Activated B cell treated with CpG ODN at 0.5 μM for 24 hours (primary cell): ENCODE measurements at regions of chr9 and their contacts with region 1.

Region 1: GRCh38 chr9:2014696-2015580 is at the start of gene SMARCA2:
- DNase-seq: peak; percentile 94
- ATAC-seq: peak; percentile 82
- H3K4me3 Mint-ChIP-seq: peak within 1 kb of the TSS; percentile 99
- H3K27ac Mint-ChIP-seq: peak within 1 kb of the TSS; percentile 98
- H3K4me1 Mint-ChIP-seq: peaks cover 28% of the 10 kb centered on the region
- H3K27me3 Mint-ChIP-seq: peaks cover 8% of the 10 kb centered on the region
- CTCF ChIP-seq: no peak
- total RNA-seq, gene SMARCA2: 235 and 238 TPM in 2 replicates

Region 2: DNA sequence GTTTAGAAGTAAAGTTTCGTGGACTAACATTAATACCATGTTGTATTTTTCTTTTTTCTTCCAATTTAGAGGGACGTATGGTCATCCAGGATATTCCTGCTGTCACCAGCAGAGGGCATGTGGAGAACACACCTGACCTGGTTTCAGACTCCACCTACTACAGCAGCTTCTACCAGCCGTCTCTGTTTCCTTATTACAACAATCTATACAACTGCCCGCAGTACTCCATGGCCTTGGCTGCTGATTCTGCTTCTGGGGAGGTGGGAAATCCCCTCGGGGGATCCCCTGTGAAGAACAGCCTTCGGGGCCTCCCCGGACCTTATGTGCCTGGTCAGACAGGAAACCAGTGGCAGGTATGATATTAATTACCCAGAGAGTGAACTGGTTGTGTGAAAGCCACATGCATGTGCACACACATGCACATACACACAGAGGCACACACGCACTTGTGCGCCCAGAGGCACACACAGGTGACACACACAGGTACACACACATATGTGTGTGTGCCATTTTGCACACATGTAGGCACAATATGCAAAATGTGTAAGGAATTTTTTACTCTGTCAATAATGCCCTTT is 1121.0 kb before region 1 on chr9:
- CTCF ChIA-PET with region 1: no interaction called
- POLR2A ChIA-PET with region 1: interaction called, 3 read pairs
- intact Hi-C with region 1: loop called (anchors 10 kb)
- DNase-seq: peak; percentile 38
- ATAC-seq: peak; percentile 98
- H3K4me3 Mint-ChIP-seq: no peak overlapping the region
- H3K27ac Mint-ChIP-seq: peak overlapping the region; percentile 47
- H3K4me1 Mint-ChIP-seq: peaks cover 13% of the 10 kb centered on the region
- H3K27me3 Mint-ChIP-seq: peaks cover 18% of the 10 kb centered on the region
- CTCF ChIP-seq: no peak

Region 3: GRCh38 chr9:1939926-1940368 is 75.0 kb before region 1 on chr9:
- CTCF ChIA-PET with region 1: interaction called, 8 read pairs
- POLR2A ChIA-PET with region 1: interaction called, 3 read pairs
- intact Hi-C with region 1: loop called (anchors 2 kb)
- DNase-seq: no peak
- ATAC-seq: peak; percentile 85
- H3K4me3 Mint-ChIP-seq: peak overlapping the region; percentile 15
- H3K27ac Mint-ChIP-seq: peak overlapping the region; percentile 32
- H3K4me1 Mint-ChIP-seq: peaks cover 25% of the 10 kb centered on the region
- H3K27me3 Mint-ChIP-seq: no peaks in the 10 kb centered on the region
- CTCF ChIP-seq: no peak

Region 4: DNA sequence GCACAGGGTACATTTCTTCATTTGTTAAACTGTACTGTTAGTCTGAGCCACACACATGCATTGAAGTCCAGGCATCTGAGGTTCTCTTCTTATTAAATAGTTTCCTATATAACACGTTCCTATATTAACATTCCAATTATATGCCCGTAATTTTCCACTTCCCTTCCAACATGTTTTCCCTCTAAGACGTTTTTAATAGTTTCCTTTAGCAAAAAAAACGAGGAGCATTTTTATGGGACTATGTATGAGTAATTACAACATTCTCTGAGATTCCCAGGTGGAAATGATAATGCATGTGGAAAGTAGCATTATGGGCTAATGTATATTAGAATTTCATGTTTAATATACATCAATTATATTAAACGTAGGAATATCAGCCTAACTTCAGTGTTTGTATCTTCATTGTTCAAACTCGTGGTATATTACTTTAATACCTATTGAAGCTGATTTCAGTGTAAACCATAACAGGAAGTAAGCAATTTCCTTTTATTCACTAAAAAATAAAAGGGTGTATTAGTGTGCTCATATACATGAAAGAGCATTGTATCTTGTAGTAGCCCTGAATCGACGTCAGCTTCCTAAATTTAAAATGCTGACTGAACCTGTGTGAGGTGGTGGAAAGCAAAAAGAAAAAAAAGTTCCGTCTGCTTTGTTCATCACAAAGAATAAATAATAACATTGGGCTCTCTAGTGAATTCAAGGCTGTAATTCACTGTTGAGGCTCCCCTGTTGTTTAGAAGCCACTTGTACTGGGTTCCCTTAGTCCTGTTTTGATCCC is 11.5 kb after region 1 on chr9:
- CTCF ChIA-PET with region 1: no interaction called
- POLR2A ChIA-PET with region 1: interaction called, 10 read pairs
- intact Hi-C with region 1: loop called (anchors 1 kb)
- DNase-seq: no peak
- ATAC-seq: no peak
- H3K4me3 Mint-ChIP-seq: no peak overlapping the region
- H3K27ac Mint-ChIP-seq: no peak overlapping the region
- H3K4me1 Mint-ChIP-seq: peaks cover 89% of the 10 kb centered on the region
- H3K27me3 Mint-ChIP-seq: no peaks in the 10 kb centered on the region
- CTCF ChIP-seq: no peak

Region 5: GRCh38 chr9:2053883-2054845 is 39.2 kb after region 1 on chr9:
- CTCF ChIA-PET with region 1: interaction called, 5 read pairs
- POLR2A ChIA-PET with region 1: interaction called, 70 read pairs
- intact Hi-C with region 1: loop called (anchors 1 kb)
- DNase-seq: peak; percentile 27
- ATAC-seq: peak; percentile 92
- H3K4me3 Mint-ChIP-seq: peak overlapping the region; percentile 55
- H3K27ac Mint-ChIP-seq: peak overlapping the region; percentile 85
- H3K4me1 Mint-ChIP-seq: peaks cover 29% of the 10 kb centered on the region
- H3K27me3 Mint-ChIP-seq: no peaks in the 10 kb centered on the region
- CTCF ChIP-seq: no peak

Region 6: DNA sequence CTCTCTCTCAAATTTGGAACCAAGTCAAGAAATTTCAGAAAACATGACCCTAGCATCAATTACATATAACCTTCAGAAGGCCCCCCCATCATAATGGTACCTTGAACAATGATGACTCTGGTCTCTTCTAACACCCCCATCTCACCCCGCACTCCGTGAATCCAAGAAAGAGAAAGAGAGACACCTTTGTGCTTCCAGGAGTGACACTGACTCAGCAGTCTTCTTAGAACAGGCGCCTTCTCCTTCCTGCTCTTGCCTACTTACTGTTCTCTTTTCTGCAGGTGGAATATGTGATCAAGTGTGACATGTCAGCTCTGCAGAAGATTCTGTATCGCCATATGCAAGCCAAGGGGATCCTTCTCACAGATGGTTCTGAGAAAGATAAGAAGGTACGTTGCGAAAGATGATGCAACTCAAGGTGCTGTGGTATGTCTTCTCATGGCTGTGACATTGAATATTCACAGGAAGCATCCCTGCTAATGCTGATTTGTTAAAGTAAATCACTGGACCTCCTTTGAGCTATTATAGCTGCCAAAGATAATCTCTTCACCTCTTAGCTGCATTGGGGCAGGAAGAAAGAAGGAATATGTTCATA is 81.5 kb after region 1 on chr9:
- CTCF ChIA-PET with region 1: no interaction called
- POLR2A ChIA-PET with region 1: no interaction called
- intact Hi-C with region 1: no loop called
- DNase-seq: no peak
- ATAC-seq: no peak
- H3K4me3 Mint-ChIP-seq: no peak overlapping the region
- H3K27ac Mint-ChIP-seq: peak overlapping the region; percentile 3
- H3K4me1 Mint-ChIP-seq: no peaks in the 10 kb centered on the region
- H3K27me3 Mint-ChIP-seq: no peaks in the 10 kb centered on the region
- CTCF ChIP-seq: no peak

Region 7: DNA sequence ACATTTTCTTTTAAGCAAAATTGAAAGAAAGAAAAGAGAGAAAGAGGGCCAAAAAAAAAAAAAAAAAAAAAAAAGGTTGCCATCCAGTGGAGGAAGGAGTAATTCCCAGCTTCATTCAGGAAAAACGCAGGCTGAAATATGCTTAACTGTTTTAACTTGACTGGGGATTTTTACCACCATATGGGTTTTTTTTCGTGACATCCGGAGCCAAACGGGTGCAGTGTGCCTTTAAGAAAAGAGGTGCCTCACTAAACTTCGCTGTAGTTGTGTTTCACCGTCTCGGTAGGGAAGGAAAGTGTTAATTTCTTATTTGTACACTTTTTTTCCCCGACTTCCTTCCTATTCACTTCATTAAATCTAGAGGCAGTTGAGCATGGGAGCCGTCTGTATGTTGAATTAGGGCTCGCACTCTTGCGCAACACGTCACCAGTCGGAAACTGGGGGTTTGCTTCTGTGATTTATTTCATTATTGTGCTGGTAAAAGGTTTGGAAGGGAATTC is 143.2 kb after region 1 on chr9:
- CTCF ChIA-PET with region 1: no interaction called
- POLR2A ChIA-PET with region 1: interaction called, 3 read pairs
- intact Hi-C with region 1: loop called (anchors 2 kb)
- DNase-seq: no peak
- ATAC-seq: peak; percentile 73
- H3K4me3 Mint-ChIP-seq: peak overlapping the region; percentile 89
- H3K27ac Mint-ChIP-seq: peak overlapping the region; percentile 87
- H3K4me1 Mint-ChIP-seq: peaks cover 62% of the 10 kb centered on the region
- H3K27me3 Mint-ChIP-seq: no peaks in the 10 kb centered on the region
- CTCF ChIP-seq: no peak

Region 8: GRCh38 chr9:3299872-3300271 is 1284.9 kb after region 1 on chr9:
- CTCF ChIA-PET with region 1: no interaction called
- POLR2A ChIA-PET with region 1: no interaction called
- intact Hi-C with region 1: loop called (anchors 5 kb)
- DNase-seq: no peak
- ATAC-seq: peak; percentile 93
- H3K4me3 Mint-ChIP-seq: no peak overlapping the region
- H3K27ac Mint-ChIP-seq: peak overlapping the region; percentile 51
- H3K4me1 Mint-ChIP-seq: peaks cover 22% of the 10 kb centered on the region
- H3K27me3 Mint-ChIP-seq: no peaks in the 10 kb centered on the region
- CTCF ChIP-seq: no peak